ENCODE measurements at regions of chr9 and their contacts with region 1.

Region 1: DNA sequence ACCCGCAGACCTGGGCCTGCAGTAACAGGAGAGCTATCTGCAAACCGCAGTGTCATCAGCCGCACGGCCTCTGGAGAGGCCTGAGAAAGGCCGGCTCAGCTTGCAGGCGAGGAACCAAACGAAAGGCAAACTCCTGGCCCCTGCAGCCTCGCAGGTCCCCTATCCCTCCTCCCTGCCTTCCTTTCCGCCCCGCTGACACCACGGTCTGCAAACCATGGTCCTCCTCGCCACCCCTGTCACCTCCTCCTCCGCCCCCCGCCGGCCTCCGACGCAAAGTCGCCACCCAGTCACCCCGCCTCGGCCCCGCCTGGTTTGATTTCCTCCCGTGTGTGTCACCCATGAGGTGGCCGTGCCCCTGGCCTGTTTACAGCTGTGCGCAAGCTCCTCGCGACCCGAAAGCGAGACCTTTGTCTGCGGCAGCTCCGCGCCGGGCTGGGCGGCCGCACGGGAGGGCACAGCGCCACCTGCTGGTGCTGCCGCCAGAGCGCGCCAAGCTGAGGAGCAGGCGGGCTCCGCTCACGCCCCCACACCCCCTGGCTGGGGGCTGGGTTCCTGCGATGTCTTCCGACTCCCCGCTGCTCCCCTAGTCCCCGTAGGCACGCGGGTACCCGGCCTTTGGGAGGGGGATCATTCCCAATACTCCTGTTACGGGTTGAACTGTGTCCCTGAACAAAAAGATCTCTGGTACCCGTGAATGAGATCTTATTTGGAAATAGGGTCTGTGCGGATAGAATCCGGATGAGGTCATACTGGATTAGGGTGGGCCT is 19.4 kb downstream of the GBGT1 start:
- DNase-seq: peak; percentile 96
- H3K4me3 Mint-ChIP-seq: peak overlapping the region; percentile 75
- H3K27ac Mint-ChIP-seq: peak overlapping the region; percentile 90
- H3K4me1 Mint-ChIP-seq: peaks cover 80% of the 10 kb centered on the region
- H3K27me3 Mint-ChIP-seq: no peaks in the 10 kb centered on the region

Region 2: GRCh38 chr9:133023117-133023890 is 121.0 kb before region 1 on chr9:
- CTCF ChIA-PET with region 1: interaction called, 35 read pairs
- POLR2A ChIA-PET with region 1: interaction called, 8 read pairs
- DNase-seq: peak; percentile 76
- H3K4me3 Mint-ChIP-seq: peak overlapping the region; percentile 44
- H3K27ac Mint-ChIP-seq: peak overlapping the region; percentile 49
- H3K4me1 Mint-ChIP-seq: peaks cover 20% of the 10 kb centered on the region
- H3K27me3 Mint-ChIP-seq: peaks cover 4% of the 10 kb centered on the region

Region 3: GRCh38 chr9:133042676-133043075 is 101.6 kb before region 1 on chr9:
- CTCF ChIA-PET with region 1: interaction called, 21 read pairs
- POLR2A ChIA-PET with region 1: interaction called, 4 read pairs
- DNase-seq: no peak
- H3K4me3 Mint-ChIP-seq: no peak overlapping the region
- H3K27ac Mint-ChIP-seq: no peak overlapping the region
- H3K4me1 Mint-ChIP-seq: peaks cover 3% of the 10 kb centered on the region
- H3K27me3 Mint-ChIP-seq: no peaks in the 10 kb centered on the region

Region 4: DNA sequence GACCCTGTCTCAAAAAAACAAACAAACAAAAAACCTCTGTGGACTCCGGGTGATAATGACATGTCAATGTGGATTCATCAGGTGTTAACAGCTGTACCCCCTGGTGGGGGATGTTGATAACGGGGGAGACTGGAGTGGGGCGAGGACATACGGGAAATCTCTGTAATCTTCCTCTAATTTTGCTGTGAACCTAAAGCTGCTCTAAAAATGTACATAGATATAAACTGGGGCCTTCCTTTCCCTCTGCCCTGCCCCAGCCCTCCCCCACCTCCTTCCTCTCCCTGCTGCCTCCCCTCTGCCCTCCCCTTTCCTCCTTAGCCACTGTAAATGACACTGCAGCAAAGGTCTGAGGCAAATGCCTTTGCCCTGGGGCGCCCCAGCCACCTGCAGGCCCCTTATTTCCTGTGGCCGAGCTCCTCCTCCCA is 83.9 kb before region 1 on chr9:
- CTCF ChIA-PET with region 1: interaction called, 19 read pairs
- POLR2A ChIA-PET with region 1: interaction called, 9 read pairs
- DNase-seq: no peak
- H3K4me3 Mint-ChIP-seq: no peak overlapping the region
- H3K27ac Mint-ChIP-seq: peak overlapping the region; percentile 81
- H3K4me1 Mint-ChIP-seq: peaks cover 50% of the 10 kb centered on the region
- H3K27me3 Mint-ChIP-seq: no peaks in the 10 kb centered on the region

Region 5: GRCh38 chr9:133103183-133103986 is 40.9 kb before region 1 on chr9:
- CTCF ChIA-PET with region 1: interaction called, 131 read pairs
- POLR2A ChIA-PET with region 1: interaction called, 22 read pairs
- DNase-seq: peak; percentile 58
- H3K4me3 Mint-ChIP-seq: no peak overlapping the region
- H3K27ac Mint-ChIP-seq: peak overlapping the region; percentile 64
- H3K4me1 Mint-ChIP-seq: no peaks in the 10 kb centered on the region
- H3K27me3 Mint-ChIP-seq: no peaks in the 10 kb centered on the region

Region 6: GRCh38 chr9:133115448-133116345 is 28.6 kb before region 1 on chr9:
- CTCF ChIA-PET with region 1: interaction called, 93 read pairs
- POLR2A ChIA-PET with region 1: interaction called, 131 read pairs
- DNase-seq: peak; percentile 79
- H3K4me3 Mint-ChIP-seq: peak overlapping the region; percentile 35
- H3K27ac Mint-ChIP-seq: peak overlapping the region; percentile 87
- H3K4me1 Mint-ChIP-seq: peaks cover 83% of the 10 kb centered on the region
- H3K27me3 Mint-ChIP-seq: no peaks in the 10 kb centered on the region

Region 7: DNA sequence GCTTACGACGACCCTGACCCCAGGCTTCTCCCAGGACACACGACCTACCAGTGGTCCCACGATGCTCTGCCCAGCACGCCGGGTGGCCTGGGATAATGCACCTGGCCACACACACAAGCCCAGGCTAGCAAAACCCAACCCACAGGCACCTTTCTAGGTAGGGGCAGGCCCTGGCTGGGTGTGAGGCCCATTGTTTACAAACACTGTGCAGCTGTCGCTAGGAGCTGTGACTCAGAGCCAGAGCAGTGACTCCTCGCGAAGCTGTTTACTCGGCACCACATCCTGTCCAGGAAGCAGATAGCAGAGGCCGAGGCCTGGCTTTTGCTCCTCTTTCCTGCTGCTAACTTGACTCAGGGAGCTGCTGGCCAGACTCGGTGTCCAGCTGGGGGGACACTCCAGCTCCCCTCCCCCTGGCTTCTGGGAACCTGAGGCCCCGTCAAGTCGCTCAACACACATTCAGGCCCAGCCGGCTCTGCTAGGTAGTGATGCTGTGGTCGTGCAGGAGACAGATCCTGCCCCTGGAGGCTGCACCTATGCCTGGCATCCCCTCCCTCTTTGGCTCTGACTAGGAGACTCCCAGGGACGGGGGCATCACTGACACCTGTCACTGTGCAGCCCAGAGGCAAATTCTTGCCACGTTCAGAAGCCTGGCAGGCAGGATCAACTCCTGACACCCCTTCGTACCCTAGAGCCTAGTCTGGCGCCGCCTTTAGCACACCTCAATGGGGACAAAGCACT is 10.5 kb before region 1 on chr9:
- CTCF ChIA-PET with region 1: interaction called, 190 read pairs
- POLR2A ChIA-PET with region 1: interaction called, 118 read pairs
- DNase-seq: peak; percentile 94
- H3K4me3 Mint-ChIP-seq: peak overlapping the region; percentile 36
- H3K27ac Mint-ChIP-seq: peak overlapping the region; percentile 99
- H3K4me1 Mint-ChIP-seq: peaks cover 88% of the 10 kb centered on the region
- H3K27me3 Mint-ChIP-seq: no peaks in the 10 kb centered on the region

Region 8: DNA sequence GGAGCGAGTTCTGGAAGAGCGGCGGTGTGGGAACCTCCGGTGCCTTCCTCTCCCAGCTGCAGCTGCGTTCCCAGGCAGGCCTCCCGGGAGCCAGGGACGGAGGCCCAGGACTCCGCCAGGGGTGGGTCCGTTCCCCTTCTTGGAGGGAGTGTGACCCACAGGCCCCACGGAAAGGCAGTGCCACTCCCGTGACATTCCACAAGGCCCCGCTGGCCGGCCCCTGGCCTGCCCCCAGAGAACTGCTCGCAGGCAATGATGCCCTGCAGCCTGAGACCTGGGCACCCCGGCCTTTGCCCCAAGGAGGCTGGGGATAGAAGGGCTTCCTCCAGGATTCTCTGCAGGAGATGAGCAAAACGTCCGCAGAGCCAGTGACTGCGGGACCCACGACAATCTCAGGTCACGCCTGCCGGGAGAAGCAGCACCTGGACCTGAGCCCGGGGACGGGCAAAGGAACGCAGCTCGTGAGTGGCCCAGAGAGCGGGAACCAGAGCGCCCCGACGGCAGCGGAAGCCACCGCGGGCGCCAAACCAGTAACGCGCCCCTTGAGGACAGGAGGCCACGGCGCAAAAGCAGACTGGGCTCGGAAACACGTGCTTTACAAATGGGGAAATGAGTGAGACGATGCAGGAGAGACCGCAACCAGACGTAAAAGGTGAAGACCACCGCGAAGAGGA is 55.5 kb after region 1 on chr9:
- CTCF ChIA-PET with region 1: no interaction called
- POLR2A ChIA-PET with region 1: no interaction called
- DNase-seq: peak; percentile 28
- H3K4me3 Mint-ChIP-seq: peak overlapping the region; percentile 45
- H3K27ac Mint-ChIP-seq: no peak overlapping the region
- H3K4me1 Mint-ChIP-seq: peaks cover 4% of the 10 kb centered on the region
- H3K27me3 Mint-ChIP-seq: peaks cover 8% of the 10 kb centered on the region